ENCODE measurements at regions of chrX and their contacts with region 1.

Region 1: GRCh38 chrX:15564981-15565579 is 35.7 kb downstream of the ACE2 start:
- DNase-seq: peak; percentile 13 to 72
- ATAC-seq: peak; percentile 94 to 98
- H3K4me3 ChIP-seq: no peak overlapping the region
- H3K27ac ChIP-seq: no peak overlapping the region
- H3K4me1 ChIP-seq: no peaks in the 10 kb centered on the region
- CTCF ChIP-seq: peak; percentile 67
- EP300 ChIP-seq: no peak
- POLR2A ChIP-seq: no peak
- RAD21 ChIP-seq: peak; percentile 77 to 81

Region 2: DNA sequence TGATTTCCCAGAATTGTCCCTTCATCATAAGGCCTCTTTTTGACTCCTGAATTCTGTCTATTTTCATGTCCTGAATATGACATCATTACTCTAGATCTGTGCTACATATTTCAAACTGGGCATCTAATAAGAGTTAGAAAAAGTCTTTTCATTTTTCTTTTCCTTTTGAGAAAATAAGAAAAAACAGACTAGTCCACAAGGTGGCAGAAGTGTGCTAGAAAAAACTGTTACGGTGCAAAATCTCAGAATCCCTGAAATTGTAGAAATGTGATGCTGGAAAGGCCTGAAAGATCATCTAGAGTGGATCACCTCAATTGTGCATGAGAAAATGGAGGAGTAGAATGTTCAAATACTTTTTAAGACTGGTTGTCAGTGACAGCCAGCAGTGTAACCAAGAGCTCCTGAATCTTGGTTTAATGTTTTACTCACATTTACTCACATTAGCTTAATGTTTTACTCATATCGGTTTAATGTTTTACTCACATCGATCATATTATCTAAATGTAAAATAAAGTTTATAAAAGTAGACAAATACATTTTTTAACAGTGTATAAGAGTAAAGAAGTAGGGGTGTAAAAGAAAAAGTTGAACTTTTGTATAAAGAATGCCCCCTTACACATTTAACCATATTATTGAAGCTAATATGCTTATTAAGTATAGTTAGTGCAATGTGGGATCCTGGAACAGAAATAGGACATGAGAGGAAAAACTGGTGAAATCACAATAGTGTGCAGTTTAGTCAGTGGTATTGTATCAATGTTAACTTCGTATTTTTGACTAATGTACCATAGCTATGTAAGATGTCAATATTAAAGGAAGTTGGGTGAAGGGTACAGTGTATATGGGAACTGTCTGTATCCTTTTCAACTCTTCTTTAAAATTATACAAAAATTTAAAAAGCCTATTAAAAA is 264.9 kb before region 1 on chrX:
- CTCF ChIA-PET with region 1: interaction called, 11 read pairs
- POLR2A ChIA-PET with region 1: no interaction called
- DNase-seq: peak; percentile 25 to 33
- ATAC-seq: peak; percentile 19 to 63; a peak in 3 of 6 replicates
- H3K4me3 ChIP-seq: no peak overlapping the region
- H3K27ac ChIP-seq: peak overlapping the region; percentile 58 to 77
- H3K4me1 ChIP-seq: peaks cover 14% of the 10 kb centered on the region
- CTCF ChIP-seq: peak; percentile 64
- EP300 ChIP-seq: no peak
- POLR2A ChIP-seq: no peak
- RAD21 ChIP-seq: peak; percentile 59 to 70

Region 3: DNA sequence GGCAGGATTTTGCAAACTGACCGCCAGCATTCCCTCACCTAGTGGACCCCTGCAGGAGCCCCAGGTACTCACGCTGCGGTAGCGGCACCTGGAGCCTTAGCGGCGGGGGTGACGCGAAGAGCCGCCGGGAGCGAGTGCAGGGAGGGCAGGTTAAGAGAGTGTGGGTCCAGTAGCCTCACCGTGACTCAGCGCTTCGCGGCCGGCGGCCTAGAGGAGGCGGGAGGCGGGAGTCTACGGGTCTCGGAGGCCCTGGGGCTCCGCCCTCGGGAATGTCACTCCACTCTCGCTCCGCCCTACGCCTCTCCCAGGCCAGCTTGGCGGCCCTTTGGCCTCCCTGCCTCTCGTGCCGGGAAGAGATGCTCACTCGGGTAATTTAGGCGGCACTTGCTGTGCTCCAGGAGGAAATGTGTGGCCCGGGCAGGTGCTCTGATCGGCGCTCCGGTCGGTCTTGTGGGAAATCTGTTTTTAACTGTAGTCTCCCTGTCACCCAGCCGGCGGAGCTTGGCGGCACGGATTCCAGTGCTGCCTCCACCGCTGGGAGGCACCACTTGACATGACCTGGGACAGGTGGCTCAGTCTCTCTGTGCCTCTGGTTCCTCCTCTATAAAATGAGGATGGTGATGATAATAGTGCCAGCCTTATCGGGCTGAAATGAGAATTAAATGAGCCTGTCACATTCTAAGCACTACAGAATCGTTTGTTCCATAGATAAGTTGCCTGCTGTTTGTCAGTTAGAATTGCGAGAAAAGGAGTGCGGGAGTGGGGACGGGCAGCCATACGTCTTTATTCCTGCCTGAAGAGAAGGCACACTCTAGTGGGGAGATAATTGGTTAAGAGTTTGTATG is 71.7 kb before region 1 on chrX and contains the start of gene PIR:
- CTCF ChIA-PET with region 1: interaction called, 14 read pairs
- POLR2A ChIA-PET with region 1: interaction called, 4 read pairs
- DNase-seq: peak; percentile 82 to 91
- ATAC-seq: peak; percentile 99
- H3K4me3 ChIP-seq: peak within 1 kb of the TSS; percentile 68
- H3K27ac ChIP-seq: peak within 1 kb of the TSS; percentile 98 to 99
- H3K4me1 ChIP-seq: peaks cover 23% of the 10 kb centered on the region
- CTCF ChIP-seq: peak; percentile 52
- EP300 ChIP-seq: no peak
- POLR2A ChIP-seq: peak; percentile 77
- RAD21 ChIP-seq: no peak
- polyA plus RNA-seq, gene PIR: 99.8 and 120 TPM in 2 replicates

Region 4: DNA sequence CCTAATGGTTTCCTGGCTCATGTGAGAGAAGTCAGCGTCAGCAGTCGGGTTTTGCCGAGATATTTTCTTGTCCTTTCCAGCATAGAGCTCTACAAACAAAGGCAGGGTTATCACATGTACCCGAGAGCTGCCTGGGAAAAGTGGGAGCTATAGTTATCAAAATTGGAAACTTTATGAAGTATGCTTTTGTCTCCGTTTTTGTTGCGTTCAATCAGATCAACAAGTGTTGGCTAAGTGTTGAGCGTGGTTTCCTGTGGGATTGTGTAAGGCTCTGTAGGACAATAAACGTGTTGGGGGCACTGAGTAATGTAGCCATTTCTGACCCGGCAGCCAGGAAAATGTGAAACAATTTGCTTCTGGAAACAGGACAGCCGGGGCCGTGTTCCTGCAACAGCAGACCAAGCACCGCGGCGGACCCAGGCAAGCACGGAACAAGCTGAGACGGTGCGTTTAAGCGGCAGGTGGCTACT is 64.5 kb before region 1 on chrX and contains the start of gene BMX:
- CTCF ChIA-PET with region 1: interaction called, 13 read pairs
- POLR2A ChIA-PET with region 1: no interaction called
- DNase-seq: no peak
- ATAC-seq: no peak
- H3K4me3 ChIP-seq: no peak within 1 kb of the TSS
- H3K27ac ChIP-seq: no peak within 1 kb of the TSS
- H3K4me1 ChIP-seq: no peaks in the 10 kb centered on the region
- CTCF ChIP-seq: no peak
- EP300 ChIP-seq: no peak
- POLR2A ChIP-seq: no peak
- RAD21 ChIP-seq: no peak
- polyA plus RNA-seq, gene BMX: not detected in 2 replicates